MCF 10A (cell line): ENCODE measurements at regions of chr22 and their contacts with region 1.

Region 1: GRCh38 chr22:33529424-33530113 is 390.7 kb downstream of the LARGE1 start:
- DNase-seq: no peak
- H3K4me3 Mint-ChIP-seq: no peak overlapping the region
- H3K27ac Mint-ChIP-seq: no peak overlapping the region
- H3K4me1 Mint-ChIP-seq: no peaks in the 10 kb centered on the region
- H3K27me3 Mint-ChIP-seq: no peaks in the 10 kb centered on the region
- CTCF ChIP-seq: no peak

Region 2: GRCh38 chr22:33519071-33519973 is 10.2 kb before region 1 on chr22:
- CTCF ChIA-PET with region 1: interaction called, 34 read pairs
- POLR2A ChIA-PET with region 1: no interaction called
- intact Hi-C with region 1: no loop called
- DNase-seq: no peak
- H3K4me3 Mint-ChIP-seq: no peak overlapping the region
- H3K27ac Mint-ChIP-seq: no peak overlapping the region
- H3K4me1 Mint-ChIP-seq: no peaks in the 10 kb centered on the region
- H3K27me3 Mint-ChIP-seq: no peaks in the 10 kb centered on the region
- CTCF ChIP-seq: peak; percentile 60